Mammary epithelial cell (primary cell): ENCODE measurements at regions of chr15 and their contacts with region 1.

Region 1: DNA sequence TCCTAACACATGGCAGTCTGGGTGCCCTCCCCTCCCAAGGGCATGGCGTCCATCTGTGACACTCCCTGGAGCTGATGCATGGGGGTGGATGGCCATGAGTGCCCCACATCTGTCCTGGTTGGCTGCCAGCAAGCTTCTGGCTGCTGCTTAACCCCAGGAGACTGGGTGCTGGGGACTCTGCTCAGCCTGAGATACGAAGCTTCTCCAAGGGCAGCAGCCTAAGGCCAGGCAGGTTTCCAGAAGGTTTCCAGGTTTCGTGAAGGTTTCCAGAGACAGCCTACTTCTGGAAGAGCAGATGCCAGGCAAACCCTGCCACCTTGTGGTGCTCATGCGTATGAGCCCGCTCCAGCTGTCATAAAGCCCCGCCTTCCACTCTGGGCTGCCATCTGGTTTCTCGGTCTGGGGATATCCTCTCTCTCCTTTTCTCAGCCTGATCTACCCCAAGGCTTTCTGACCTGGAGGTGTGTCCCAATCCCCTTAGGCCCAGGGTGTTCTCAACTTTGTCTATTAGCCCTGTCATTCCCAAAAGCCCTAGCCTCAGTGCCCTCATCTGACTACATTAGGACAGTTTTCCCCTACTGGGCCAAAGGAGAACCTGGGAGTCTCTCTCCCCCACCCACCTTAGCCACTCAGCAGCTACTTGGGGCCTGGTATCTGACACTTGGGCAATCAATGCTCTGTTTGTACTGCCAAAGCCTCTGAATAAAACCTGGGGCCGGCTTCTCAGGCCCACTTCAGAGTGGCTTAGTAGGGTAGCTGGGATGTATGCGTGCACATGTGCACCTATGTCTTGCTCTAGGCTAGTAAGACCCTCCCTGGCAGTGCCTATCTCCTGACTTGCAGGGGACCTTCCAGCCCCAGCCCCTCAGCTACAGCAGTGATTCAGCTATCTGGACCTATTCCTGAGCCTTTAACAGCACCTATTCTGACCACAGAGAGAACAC is 12.0 kb downstream of the MRPL46 start:
- DNase-seq: peak; percentile 59
- H3K4me3 ChIP-seq: no peak overlapping the region
- H3K27ac ChIP-seq: no peak overlapping the region
- H3K4me1 ChIP-seq: no peaks in the 10 kb centered on the region
- H3K27me3 ChIP-seq: no peaks in the 10 kb centered on the region
- CTCF ChIP-seq: peak; percentile 89 to 90

Region 2: GRCh38 chr15:87805128-87805820 is 649.9 kb before region 1 on chr15:
- CTCF ChIA-PET with region 1: no interaction called
- dilution Hi-C with region 1: no loop called
- in situ Hi-C with region 1: no loop called
- intact Hi-C with region 1: no loop called
- DNase-seq: no peak
- H3K4me3 ChIP-seq: no peak overlapping the region
- H3K27ac ChIP-seq: no peak overlapping the region
- H3K4me1 ChIP-seq: no peaks in the 10 kb centered on the region
- H3K27me3 ChIP-seq: no peaks in the 10 kb centered on the region
- CTCF ChIP-seq: no peak

Region 3: GRCh38 chr15:88393719-88394519 is 61.2 kb before region 1 on chr15:
- CTCF ChIA-PET with region 1: no interaction called
- dilution Hi-C with region 1: loop called (anchors 5 kb)
- in situ Hi-C with region 1: no loop called
- intact Hi-C with region 1: no loop called
- DNase-seq: peak; percentile 83
- H3K4me3 ChIP-seq: no peak overlapping the region
- H3K27ac ChIP-seq: no peak overlapping the region
- H3K4me1 ChIP-seq: no peaks in the 10 kb centered on the region
- H3K27me3 ChIP-seq: no peaks in the 10 kb centered on the region
- CTCF ChIP-seq: no peak

Region 4: DNA sequence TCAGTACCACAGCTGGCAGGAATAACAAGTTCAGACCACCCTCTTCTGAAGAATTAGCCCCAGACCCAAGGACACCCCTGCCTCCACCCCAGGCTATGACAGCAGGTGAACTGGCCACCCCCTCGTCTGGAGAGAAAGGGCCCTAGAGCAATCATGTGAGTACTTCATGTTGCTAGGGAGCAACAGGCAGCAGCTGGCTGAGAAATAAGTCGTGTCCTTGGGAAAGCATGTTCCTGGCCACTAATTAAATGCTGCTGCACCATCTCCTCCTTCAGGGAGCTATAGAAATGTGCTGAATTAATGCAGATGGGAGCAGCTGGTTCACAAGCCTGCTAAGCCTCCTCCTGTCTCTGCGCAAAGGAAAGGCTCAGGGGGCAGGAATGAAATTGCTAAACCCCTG is 43.9 kb after region 1 on chr15:
- CTCF ChIA-PET with region 1: no interaction called
- dilution Hi-C with region 1: no loop called
- in situ Hi-C with region 1: no loop called
- intact Hi-C with region 1: no loop called
- DNase-seq: no peak
- H3K4me3 ChIP-seq: no peak overlapping the region
- H3K27ac ChIP-seq: no peak overlapping the region
- H3K4me1 ChIP-seq: no peaks in the 10 kb centered on the region
- H3K27me3 ChIP-seq: no peaks in the 10 kb centered on the region
- CTCF ChIP-seq: no peak